Caco-2 (cell line): ENCODE measurements at regions of chr12 and their contacts with region 1.

Region 1: GRCh38 chr12:124053851-124054250 is 80.8 kb downstream of the ZNF664 start:
- DNase-seq: peak; percentile 69 to 76
- H3K4me3 ChIP-seq: no peak overlapping the region
- H3K4me3 Mint-ChIP-seq: no peak overlapping the region
- H3K27ac Mint-ChIP-seq: peak overlapping the region; percentile 21
- H3K4me1 ChIP-seq: 0 out of 2 replicates have a peak, but pooled peaks cover 3% of the 10 kb centered on the region
- H3K4me1 Mint-ChIP-seq: peaks cover 6% of the 10 kb centered on the region
- H3K27me3 ChIP-seq: no peaks in the 10 kb centered on the region
- H3K27me3 Mint-ChIP-seq: no peaks in the 10 kb centered on the region
- CTCF ChIP-seq: peak; percentile 37 to 72

Region 2: GRCh38 chr12:124224535-124225110 is 170.8 kb after region 1 on chr12:
- CTCF ChIA-PET with region 1: interaction called, 6 read pairs
- POLR2A ChIA-PET with region 1: no interaction called
- intact Hi-C with region 1: loop called (anchors 1 kb)
- DNase-seq: peak in 1 of 2 experiments; percentile 28
- H3K4me3 ChIP-seq: no peak overlapping the region
- H3K4me3 Mint-ChIP-seq: no peak overlapping the region
- H3K27ac Mint-ChIP-seq: no peak overlapping the region
- H3K4me1 ChIP-seq: no peaks in the 10 kb centered on the region
- H3K4me1 Mint-ChIP-seq: no peaks in the 10 kb centered on the region
- H3K27me3 ChIP-seq: no peaks in the 10 kb centered on the region
- H3K27me3 Mint-ChIP-seq: no peaks in the 10 kb centered on the region
- CTCF ChIP-seq: peak in 1 of 2 experiments; percentile 9

Region 3: GRCh38 chr12:124433147-124433874 is 379.5 kb after region 1 on chr12:
- CTCF ChIA-PET with region 1: no interaction called
- POLR2A ChIA-PET with region 1: no interaction called
- intact Hi-C with region 1: no loop called
- DNase-seq: no peak
- H3K4me3 ChIP-seq: no peak overlapping the region
- H3K4me3 Mint-ChIP-seq: no peak overlapping the region
- H3K27ac Mint-ChIP-seq: no peak overlapping the region
- H3K4me1 ChIP-seq: no peaks in the 10 kb centered on the region
- H3K4me1 Mint-ChIP-seq: no peaks in the 10 kb centered on the region
- H3K27me3 ChIP-seq: no peaks in the 10 kb centered on the region
- H3K27me3 Mint-ChIP-seq: no peaks in the 10 kb centered on the region
- CTCF ChIP-seq: no peak